ENCODE measurements at regions of chr2 and their contacts with region 1.

Region 1: GRCh38 chr2:30631051-30631671 is 176.1 kb downstream of the CAPN13 start:
- DNase-seq: peak in 1 of 35 experiments; percentile 42
- ATAC-seq: peak in 3 of 4 experiments; percentile 40 to 54 (median 46)
- H3K4me3 ChIP-seq: no peak overlapping the region
- H3K4me3 Mint-ChIP-seq: no peak overlapping the region
- H3K27ac ChIP-seq: no peak overlapping the region
- H3K27ac Mint-ChIP-seq: no peak overlapping the region
- H3K4me1 ChIP-seq: peaks cover 0 to 2% of the 10 kb centered on the region in 2 experiments
- H3K4me1 Mint-ChIP-seq: peaks cover 24 to 48% (median 29%) of the 10 kb centered on the region in 3 donors
- H3K27me3 ChIP-seq: no peaks in the 10 kb centered on the region
- H3K27me3 Mint-ChIP-seq: no peaks in the 10 kb centered on the region

Region 2: GRCh38 chr2:30666307-30666874 is 35.2 kb after region 1 on chr2:
- CTCF ChIA-PET with region 1: no interaction called
- POLR2A ChIA-PET with region 1: interaction called in 1 of 2 experiments, 14 read pairs
- DNase-seq: no peak
- ATAC-seq: no peak
- H3K4me3 ChIP-seq: no peak overlapping the region
- H3K4me3 Mint-ChIP-seq: no peak overlapping the region
- H3K27ac ChIP-seq: no peak overlapping the region
- H3K27ac Mint-ChIP-seq: no peak overlapping the region
- H3K4me1 ChIP-seq: no peaks in the 10 kb centered on the region
- H3K4me1 Mint-ChIP-seq: no peaks in the 10 kb centered on the region
- H3K27me3 ChIP-seq: peaks cover 0 to 6% of the 10 kb centered on the region in 2 experiments
- H3K27me3 Mint-ChIP-seq: peaks cover 0 to 11% of the 10 kb centered on the region in 2 donors

Measured in T-cell (primary cell).